B cell (primary cell): ENCODE measurements at regions of chr19 and their contacts with region 1.

Region 1: DNA sequence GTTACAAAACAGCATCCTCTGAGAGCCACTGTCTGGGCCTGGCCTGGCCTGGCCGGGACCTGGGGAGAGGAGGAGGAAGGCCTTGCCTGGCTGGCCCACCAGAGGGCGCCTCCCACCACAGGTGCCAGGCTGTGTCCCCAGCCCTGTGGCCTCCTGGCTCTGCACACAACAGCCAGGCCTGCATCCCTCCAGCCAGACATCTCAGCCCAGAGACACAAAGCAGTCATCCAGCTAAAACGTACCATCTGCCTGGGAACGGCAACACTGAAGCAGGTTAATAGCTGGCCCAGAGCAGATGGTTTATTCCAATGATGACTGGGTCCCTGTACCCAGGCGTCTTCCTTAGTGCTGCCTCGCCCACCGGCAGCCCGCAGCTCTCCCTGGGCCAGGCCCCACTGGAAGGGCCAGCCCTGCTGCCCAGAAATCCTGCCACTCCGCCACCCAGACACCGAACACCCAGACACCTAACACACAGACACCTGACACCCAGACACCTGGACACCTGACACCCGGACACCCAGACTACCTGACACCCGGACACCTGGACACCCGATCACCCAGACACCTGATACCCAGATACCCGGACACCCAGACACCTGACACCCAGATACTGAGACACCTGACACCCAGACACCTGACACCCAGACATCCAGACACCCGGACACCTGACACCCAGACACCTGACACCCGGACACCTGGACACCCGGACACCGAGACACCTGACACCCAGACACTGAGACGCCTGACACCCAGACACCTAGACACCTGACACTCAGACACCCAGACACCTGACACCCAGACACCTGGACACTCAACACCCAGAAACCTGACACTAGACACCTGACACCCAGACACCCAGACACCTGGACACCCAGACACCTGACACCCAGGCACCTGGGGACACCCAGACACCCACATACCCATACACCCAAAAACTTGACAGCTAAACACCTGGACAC is 20.1 kb downstream of the C19orf12 start:
- DNase-seq: peak; percentile 81
- ATAC-seq: peak; percentile 97
- H3K4me3 ChIP-seq: no peak overlapping the region
- H3K4me3 Mint-ChIP-seq: no peak overlapping the region
- H3K27ac ChIP-seq: peak overlapping the region in 1 of 2 donors; percentile 49
- H3K27ac Mint-ChIP-seq: peak overlapping the region; percentile 62
- H3K4me1 ChIP-seq: peaks cover 21 to 23% of the 10 kb centered on the region in 2 donors
- H3K4me1 Mint-ChIP-seq: peaks cover 22% of the 10 kb centered on the region
- H3K27me3 ChIP-seq: no peaks in the 10 kb centered on the region
- H3K27me3 Mint-ChIP-seq: no peaks in the 10 kb centered on the region
- CTCF ChIP-seq: peak; percentile 90

Region 2: DNA sequence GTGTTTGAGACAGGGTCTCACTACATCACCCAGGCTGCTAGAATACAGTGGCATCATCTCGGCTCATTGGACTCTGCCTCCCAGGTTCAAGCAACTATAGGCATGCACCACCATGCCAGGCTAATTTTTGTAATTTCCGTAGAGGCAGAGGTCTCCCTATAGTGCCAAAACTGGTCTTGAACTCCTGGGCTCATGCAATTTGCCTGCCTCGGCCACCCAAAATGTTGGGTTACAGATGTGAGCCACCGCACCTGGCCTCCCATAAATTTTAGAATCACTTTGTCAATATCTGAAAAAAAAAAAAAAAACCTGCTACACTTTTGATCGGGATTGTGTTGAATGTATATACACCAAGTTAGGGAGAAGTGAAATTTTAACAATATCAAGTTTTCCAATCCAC is 41.5 kb before region 1 on chr19:
- CTCF ChIA-PET with region 1: interaction called, 5 read pairs
- POLR2A ChIA-PET with region 1: no interaction called
- intact Hi-C with region 1: loop called (anchors 1 kb)
- DNase-seq: no peak
- ATAC-seq: no peak
- H3K4me3 ChIP-seq: no peak overlapping the region
- H3K4me3 Mint-ChIP-seq: no peak overlapping the region
- H3K27ac ChIP-seq: no peak overlapping the region
- H3K27ac Mint-ChIP-seq: no peak overlapping the region
- H3K4me1 ChIP-seq: no peaks in the 10 kb centered on the region
- H3K4me1 Mint-ChIP-seq: no peaks in the 10 kb centered on the region
- H3K27me3 ChIP-seq: peaks cover 0 to 2% (median 0%) of the 10 kb centered on the region in 4 experiments
- H3K27me3 Mint-ChIP-seq: peaks cover 32% of the 10 kb centered on the region
- CTCF ChIP-seq: no peak

Region 3: GRCh38 chr19:29665215-29665825 is 29.6 kb before region 1 on chr19 and contains the start of gene PLEKHF1:
- CTCF ChIA-PET with region 1: interaction called, 14 read pairs
- POLR2A ChIA-PET with region 1: no interaction called
- intact Hi-C with region 1: loop called (anchors 2 kb)
- DNase-seq: peak; percentile 87
- ATAC-seq: peak; percentile 97
- H3K4me3 ChIP-seq: peak within 1 kb of the TSS; percentile 18 to 87 (median 75)
- H3K4me3 Mint-ChIP-seq: peak within 1 kb of the TSS; percentile 87
- H3K27ac ChIP-seq: peak within 1 kb of the TSS; percentile 18 to 79
- H3K27ac Mint-ChIP-seq: peak within 1 kb of the TSS; percentile 80
- H3K4me1 ChIP-seq: peaks cover 31 to 42% of the 10 kb centered on the region in 2 donors
- H3K4me1 Mint-ChIP-seq: peaks cover 32% of the 10 kb centered on the region
- H3K27me3 ChIP-seq: no peaks in the 10 kb centered on the region
- H3K27me3 Mint-ChIP-seq: no peaks in the 10 kb centered on the region
- CTCF ChIP-seq: no peak
- total RNA-seq, gene PLEKHF1: 5.5 and 6.4 TPM in 2 replicates

Region 4: GRCh38 chr19:29671393-29672160 is 23.4 kb before region 1 on chr19:
- CTCF ChIA-PET with region 1: interaction called, 20 read pairs
- POLR2A ChIA-PET with region 1: no interaction called
- intact Hi-C with region 1: no loop called
- DNase-seq: peak; percentile 82
- ATAC-seq: peak; percentile 77
- H3K4me3 ChIP-seq: peak overlapping the region in 1 of 5 experiments; percentile 1
- H3K4me3 Mint-ChIP-seq: peak overlapping the region; percentile 61
- H3K27ac ChIP-seq: peak overlapping the region; percentile 89 to 96
- H3K27ac Mint-ChIP-seq: peak overlapping the region; percentile 89
- H3K4me1 ChIP-seq: peaks cover 53 to 69% of the 10 kb centered on the region in 2 donors
- H3K4me1 Mint-ChIP-seq: peaks cover 62% of the 10 kb centered on the region
- H3K27me3 ChIP-seq: no peaks in the 10 kb centered on the region
- H3K27me3 Mint-ChIP-seq: no peaks in the 10 kb centered on the region
- CTCF ChIP-seq: peak; percentile 64

Region 5: DNA sequence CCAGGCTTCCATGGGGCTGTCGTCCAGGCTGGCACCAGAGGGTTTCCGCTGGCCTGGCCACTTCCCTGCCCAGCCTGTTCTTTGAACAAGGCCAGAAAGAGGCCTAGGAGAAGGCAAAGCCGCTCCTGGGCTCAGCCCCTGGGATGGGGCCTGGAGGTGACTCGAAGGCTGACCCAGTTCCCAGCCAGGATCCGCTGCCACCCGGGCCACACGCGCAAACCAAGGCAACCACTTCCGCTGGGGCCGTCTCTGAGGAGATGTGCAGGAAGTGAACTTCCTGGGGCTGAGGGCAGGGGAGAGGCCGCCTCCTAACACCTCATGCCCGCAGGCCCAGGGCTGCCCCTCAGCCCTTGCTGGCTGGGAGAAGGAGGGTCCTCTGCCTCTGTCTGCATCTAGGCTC is 14.5 kb before region 1 on chr19:
- CTCF ChIA-PET with region 1: interaction called, 4 read pairs
- POLR2A ChIA-PET with region 1: no interaction called
- intact Hi-C with region 1: loop called (anchors 1 kb)
- DNase-seq: peak; percentile 76
- ATAC-seq: peak; percentile 90
- H3K4me3 ChIP-seq: peak overlapping the region in 2 of 5 experiments; percentile 9 to 15
- H3K4me3 Mint-ChIP-seq: peak overlapping the region; percentile 70
- H3K27ac ChIP-seq: peak overlapping the region; percentile 56 to 63
- H3K27ac Mint-ChIP-seq: peak overlapping the region; percentile 79
- H3K4me1 ChIP-seq: peaks cover 30 to 45% of the 10 kb centered on the region in 2 donors
- H3K4me1 Mint-ChIP-seq: peaks cover 33% of the 10 kb centered on the region
- H3K27me3 ChIP-seq: no peaks in the 10 kb centered on the region
- H3K27me3 Mint-ChIP-seq: no peaks in the 10 kb centered on the region
- CTCF ChIP-seq: no peak